ENCODE measurements at regions of chr7 and their contacts with region 1.

Region 1: GRCh38 chr7:91383053-91383904 is 119.0 kb downstream of the FZD1 start:
- DNase-seq: peak; percentile 86
- H3K4me3 ChIP-seq: no peak overlapping the region
- CTCF ChIP-seq: no peak

Region 2: GRCh38 chr7:91112902-91113341 is 270.4 kb before region 1 on chr7:
- in situ Hi-C with region 1: loop called (anchors 25 kb)
- DNase-seq: no peak
- H3K4me3 ChIP-seq: no peak overlapping the region
- CTCF ChIP-seq: no peak

Region 3: GRCh38 chr7:91345449-91345848 is 37.8 kb before region 1 on chr7:
- in situ Hi-C with region 1: no loop called
- DNase-seq: no peak
- H3K4me3 ChIP-seq: no peak overlapping the region
- CTCF ChIP-seq: no peak

Region 4: DNA sequence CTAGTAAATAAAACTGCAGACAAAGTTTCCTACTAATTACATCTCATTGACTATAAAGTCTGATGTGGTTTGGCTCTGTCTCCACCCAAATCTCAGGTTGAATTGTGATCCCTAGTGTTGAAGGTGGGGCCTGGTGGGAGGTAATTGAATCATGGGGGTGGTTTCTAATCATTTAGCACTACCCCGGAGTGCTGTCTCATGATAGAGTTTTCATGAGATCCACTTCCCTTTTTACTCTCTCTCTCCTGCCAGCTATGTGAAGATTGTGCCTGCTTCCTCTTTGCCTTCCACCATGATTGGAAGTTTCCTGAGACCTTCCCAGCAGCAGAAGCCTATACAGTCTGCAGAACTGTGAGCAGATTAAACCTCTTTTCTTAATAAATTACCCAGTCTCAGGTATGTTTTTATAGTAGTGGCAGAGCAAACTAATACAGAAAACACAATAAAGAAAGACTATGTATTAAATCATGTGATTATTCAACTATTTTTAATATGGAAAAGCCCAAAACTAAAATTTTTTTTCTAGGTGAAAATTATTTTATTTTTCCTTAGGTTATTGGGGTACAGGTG is 113.1 kb after region 1 on chr7:
- in situ Hi-C with region 1: no loop called
- DNase-seq: no peak
- H3K4me3 ChIP-seq: no peak overlapping the region
- CTCF ChIP-seq: no peak

Region 5: DNA sequence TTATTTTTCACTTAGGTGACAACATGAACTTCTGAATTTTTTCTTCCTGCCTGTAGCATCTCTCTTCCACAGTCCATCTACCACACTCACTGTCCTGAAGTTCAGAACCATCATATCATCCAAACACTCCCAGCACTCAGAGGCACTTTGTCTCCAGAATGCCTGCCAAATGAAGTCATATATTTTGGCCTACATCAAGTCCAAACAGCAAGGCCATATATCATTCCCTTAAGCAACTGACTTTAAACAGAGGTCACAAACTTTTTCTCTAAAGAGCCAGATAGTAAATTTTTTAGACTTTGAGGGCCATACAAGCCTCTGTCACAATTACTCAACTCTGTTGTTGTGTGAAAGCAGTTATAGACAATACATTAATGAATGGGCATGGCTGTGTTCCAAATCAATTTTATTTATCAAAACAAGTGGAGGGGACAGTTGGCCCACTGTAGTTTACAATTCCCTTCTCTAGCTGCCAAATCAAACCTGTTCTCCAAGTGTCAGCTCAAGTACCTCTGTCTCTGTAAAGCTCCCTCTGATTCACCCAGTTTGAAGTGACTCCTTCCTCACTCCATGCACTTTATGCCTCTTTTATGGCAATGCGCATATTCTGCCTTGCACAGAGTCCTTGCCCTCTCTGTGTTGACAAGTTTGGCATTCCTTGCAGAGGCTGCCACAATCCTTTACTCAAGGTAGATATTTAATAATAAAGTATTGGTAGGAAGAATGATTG is 186.6 kb after region 1 on chr7:
- in situ Hi-C with region 1: loop called (anchors 10 kb)
- DNase-seq: no peak
- H3K4me3 ChIP-seq: no peak overlapping the region
- CTCF ChIP-seq: no peak